RWPE1 (cell line): ENCODE measurements at regions of chr12 and their contacts with region 1.

Region 1: GRCh38 chr12:1583421-1584078 is 10.8 kb downstream of the FBXL14 start:
- DNase-seq: peak; percentile 70
- H3K27ac ChIP-seq: no peak overlapping the region
- CTCF ChIP-seq: peak; percentile 58

Region 2: GRCh38 chr12:1117970-1118563 is 465.5 kb before region 1 on chr12:
- CTCF ChIA-PET with region 1: interaction called, 31 read pairs
- POLR2A ChIA-PET with region 1: no interaction called
- DNase-seq: peak; percentile 12
- H3K27ac ChIP-seq: no peak overlapping the region
- CTCF ChIP-seq: peak; percentile 80

Region 3: DNA sequence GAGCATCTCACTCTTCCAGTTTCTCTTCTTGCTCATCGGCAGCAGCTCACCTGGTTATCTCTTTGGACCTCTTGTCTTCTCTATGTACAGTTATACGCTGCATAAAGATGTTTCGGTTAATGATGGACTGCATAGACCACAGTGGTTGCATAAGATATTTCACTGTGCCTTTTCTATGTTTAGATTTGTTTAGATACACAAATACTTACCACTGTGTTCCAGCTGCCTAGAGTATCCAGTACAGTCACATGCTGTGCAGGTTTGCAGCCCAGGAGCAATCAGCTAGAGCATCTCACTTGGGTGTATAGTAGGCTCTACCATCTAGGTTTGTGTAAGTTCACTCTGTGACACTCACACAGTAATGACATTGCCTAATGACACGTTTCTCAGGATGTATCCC is 46.7 kb before region 1 on chr12:
- CTCF ChIA-PET with region 1: no interaction called
- POLR2A ChIA-PET with region 1: no interaction called
- DNase-seq: no peak
- H3K27ac ChIP-seq: no peak overlapping the region
- CTCF ChIP-seq: no peak

Region 4: DNA sequence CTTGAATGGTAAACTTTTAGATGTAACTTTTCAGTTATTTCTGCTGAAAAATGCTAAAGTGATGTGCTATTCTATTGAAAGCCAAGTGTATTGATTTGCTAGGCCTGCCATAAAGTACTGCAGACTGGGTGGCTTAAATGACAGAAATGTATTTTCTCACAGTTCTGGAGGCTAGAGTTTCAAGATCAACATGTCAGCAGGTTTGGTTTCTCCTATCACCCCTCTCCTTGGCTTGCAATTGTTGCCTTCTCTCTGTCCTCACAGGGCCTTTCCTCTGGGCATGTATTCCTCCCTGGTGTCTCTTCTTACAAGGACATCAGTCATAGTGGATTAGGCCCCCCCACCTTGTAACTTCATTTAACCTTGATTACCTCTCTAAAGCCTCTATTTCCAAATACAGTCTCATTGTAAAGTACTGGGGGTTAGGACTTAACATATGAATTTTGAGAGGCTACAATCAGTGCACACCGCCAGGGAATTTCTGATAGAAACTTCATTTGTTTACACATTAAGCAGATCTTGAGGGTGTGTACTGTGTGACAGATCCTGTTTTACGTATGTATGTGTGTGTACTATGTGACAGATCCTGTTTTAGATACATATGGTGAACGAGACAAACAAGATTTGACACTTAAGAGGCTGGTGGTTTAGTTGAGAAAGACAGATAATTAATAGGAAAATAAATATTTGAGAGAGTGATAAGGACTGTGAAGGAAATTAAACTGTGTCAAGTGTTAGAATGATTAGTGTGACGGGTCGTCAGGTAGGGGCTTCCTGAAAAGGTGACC is 156.8 kb after region 1 on chr12:
- CTCF ChIA-PET with region 1: no interaction called
- POLR2A ChIA-PET with region 1: no interaction called
- DNase-seq: no peak
- H3K27ac ChIP-seq: no peak overlapping the region
- CTCF ChIP-seq: no peak

Region 5: GRCh38 chr12:2179953-2180736 is 596.6 kb after region 1 on chr12:
- CTCF ChIA-PET with region 1: no interaction called
- POLR2A ChIA-PET with region 1: no interaction called
- DNase-seq: peak; percentile 79
- H3K27ac ChIP-seq: peak overlapping the region; percentile 64
- CTCF ChIP-seq: no peak